HepG2 (cell line): ENCODE measurements at regions of chr9 and their contacts with region 1.

Region 1: DNA sequence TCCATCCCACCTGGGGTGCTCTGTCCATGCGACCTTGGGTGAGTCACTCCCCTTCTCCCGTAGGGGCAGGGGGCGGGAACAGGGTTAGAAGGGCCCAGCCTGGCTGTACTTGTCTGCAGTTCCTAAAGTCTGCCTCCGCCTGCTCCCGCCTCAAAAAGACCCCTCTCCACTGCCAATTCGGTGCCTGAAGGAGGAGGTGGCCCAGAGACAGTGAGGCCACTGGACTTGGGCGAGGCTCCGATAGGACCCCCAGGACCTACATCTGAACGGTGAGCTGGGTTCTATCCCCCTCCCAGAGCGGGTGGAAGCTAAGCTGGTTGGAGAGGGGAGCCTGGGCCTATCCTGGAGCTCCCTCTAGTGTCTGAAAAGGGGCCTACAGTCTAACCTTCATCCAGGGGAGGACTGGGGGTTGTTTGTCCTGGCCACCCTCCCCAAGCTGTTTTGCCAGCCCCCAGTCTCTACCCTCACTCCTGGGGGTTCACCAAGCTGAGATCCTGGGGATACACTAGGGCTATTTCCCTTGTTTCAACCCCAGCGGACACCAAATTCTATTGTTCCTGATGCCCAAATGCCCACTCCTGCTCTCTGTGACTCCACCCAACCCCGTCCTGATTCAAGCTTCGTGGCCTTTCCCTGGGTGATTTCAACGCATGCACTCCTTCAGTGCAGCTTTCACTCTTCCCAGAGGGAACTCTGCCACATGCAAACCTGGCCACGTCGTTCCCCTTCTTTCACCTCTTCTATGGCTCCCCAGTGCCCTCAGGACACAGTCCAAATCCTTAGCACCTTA is 6.1 kb upstream of the CRB2 start:
- DNase-seq: peak; percentile 50
- ATAC-seq: peak; percentile 72
- H3K4me3 ChIP-seq: peak overlapping the region; percentile 16 to 65 (median 43); a peak in 5 of 6 replicates
- H3K27ac ChIP-seq: no peak overlapping the region
- H3K4me1 ChIP-seq: peaks cover 46% of the 10 kb centered on the region
- H3K27me3 ChIP-seq: peaks cover 2 to 36% of the 10 kb centered on the region in 2 experiments
- CTCF ChIP-seq: peak; percentile 97
- EP300 ChIP-seq: no peak
- POLR2A ChIP-seq: no peak
- RAD21 ChIP-seq: peak; percentile 97

Region 2: GRCh38 chr9:123081824-123082223 is 268.1 kb before region 1 on chr9:
- CTCF ChIA-PET with region 1: interaction called, 27 read pairs
- POLR2A ChIA-PET with region 1: no interaction called
- in situ Hi-C with region 1: loop called (anchors 5 kb)
- intact Hi-C with region 1: loop called (anchors 1 kb)
- DNase-seq: peak; percentile 48
- ATAC-seq: peak; percentile 62; the same call in 2 of the 3 replicates
- H3K4me3 ChIP-seq: no peak overlapping the region
- H3K27ac ChIP-seq: no peak overlapping the region
- H3K4me1 ChIP-seq: peaks cover 22% of the 10 kb centered on the region
- H3K27me3 ChIP-seq: no peaks in the 10 kb centered on the region
- CTCF ChIP-seq: peak; percentile 69
- EP300 ChIP-seq: no peak
- POLR2A ChIP-seq: no peak
- RAD21 ChIP-seq: peak; percentile 48; the same call in 1 of the 2 replicates

Region 3: GRCh38 chr9:123102375-123103110 is 247.3 kb before region 1 on chr9:
- CTCF ChIA-PET with region 1: interaction called, 4 read pairs
- POLR2A ChIA-PET with region 1: no interaction called
- in situ Hi-C with region 1: no loop called
- intact Hi-C with region 1: loop called (anchors 5 kb)
- DNase-seq: no peak
- ATAC-seq: peak; percentile 30; the same call in 1 of the 3 replicates
- H3K4me3 ChIP-seq: no peak overlapping the region
- H3K27ac ChIP-seq: no peak overlapping the region
- H3K4me1 ChIP-seq: peaks cover 24% of the 10 kb centered on the region
- H3K27me3 ChIP-seq: no peaks in the 10 kb centered on the region
- CTCF ChIP-seq: peak; percentile 37
- EP300 ChIP-seq: no peak
- POLR2A ChIP-seq: no peak
- RAD21 ChIP-seq: no peak

Region 4: DNA sequence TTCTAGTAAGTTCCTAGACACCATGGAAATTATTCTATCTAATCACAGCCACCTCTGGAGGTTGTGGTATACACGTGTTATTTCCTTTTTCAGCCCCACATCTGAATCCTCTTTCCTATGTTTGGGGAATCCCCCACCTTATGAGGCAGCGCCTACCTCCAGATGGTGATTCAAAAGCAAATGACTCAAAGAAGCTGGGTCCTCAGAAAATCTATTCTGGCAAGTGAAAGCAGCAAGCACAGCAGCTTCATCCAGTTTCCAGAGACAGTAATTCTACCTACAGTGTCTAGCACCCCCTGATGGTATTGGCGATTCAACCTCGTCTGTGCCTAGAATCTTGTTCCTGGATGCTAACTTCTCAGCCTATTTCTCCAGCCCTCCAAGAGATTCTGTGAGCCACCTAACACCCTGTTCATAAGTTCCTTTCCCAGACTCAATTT is 124.5 kb before region 1 on chr9:
- CTCF ChIA-PET with region 1: no interaction called
- POLR2A ChIA-PET with region 1: no interaction called
- in situ Hi-C with region 1: no loop called
- intact Hi-C with region 1: loop called (anchors 2 kb)
- DNase-seq: peak; percentile 29
- ATAC-seq: peak; percentile 80
- H3K4me3 ChIP-seq: no peak overlapping the region
- H3K27ac ChIP-seq: no peak overlapping the region
- H3K4me1 ChIP-seq: peaks cover 23% of the 10 kb centered on the region
- H3K27me3 ChIP-seq: no peaks in the 10 kb centered on the region
- CTCF ChIP-seq: peak; percentile 72
- EP300 ChIP-seq: no peak
- POLR2A ChIP-seq: no peak
- RAD21 ChIP-seq: no peak

Region 5: GRCh38 chr9:123383512-123384170 is 33.8 kb after region 1 on chr9:
- CTCF ChIA-PET with region 1: interaction called, 35 read pairs
- POLR2A ChIA-PET with region 1: no interaction called
- in situ Hi-C with region 1: loop called (anchors 5 kb)
- intact Hi-C with region 1: loop called (anchors 1 kb)
- DNase-seq: no peak
- ATAC-seq: no peak
- H3K4me3 ChIP-seq: no peak overlapping the region
- H3K27ac ChIP-seq: no peak overlapping the region
- H3K4me1 ChIP-seq: no peaks in the 10 kb centered on the region
- H3K27me3 ChIP-seq: no peaks in the 10 kb centered on the region
- CTCF ChIP-seq: no peak
- EP300 ChIP-seq: no peak
- POLR2A ChIP-seq: no peak
- RAD21 ChIP-seq: no peak

Region 6: GRCh38 chr9:123389070-123389469 is 39.2 kb after region 1 on chr9:
- CTCF ChIA-PET with region 1: interaction called, 35 read pairs
- POLR2A ChIA-PET with region 1: no interaction called
- in situ Hi-C with region 1: loop called (anchors 5 kb)
- intact Hi-C with region 1: loop called (anchors 1 kb)
- DNase-seq: no peak
- ATAC-seq: no peak
- H3K4me3 ChIP-seq: no peak overlapping the region
- H3K27ac ChIP-seq: no peak overlapping the region
- H3K4me1 ChIP-seq: no peaks in the 10 kb centered on the region
- H3K27me3 ChIP-seq: no peaks in the 10 kb centered on the region
- CTCF ChIP-seq: no peak
- EP300 ChIP-seq: no peak
- POLR2A ChIP-seq: no peak
- RAD21 ChIP-seq: no peak

Region 7: DNA sequence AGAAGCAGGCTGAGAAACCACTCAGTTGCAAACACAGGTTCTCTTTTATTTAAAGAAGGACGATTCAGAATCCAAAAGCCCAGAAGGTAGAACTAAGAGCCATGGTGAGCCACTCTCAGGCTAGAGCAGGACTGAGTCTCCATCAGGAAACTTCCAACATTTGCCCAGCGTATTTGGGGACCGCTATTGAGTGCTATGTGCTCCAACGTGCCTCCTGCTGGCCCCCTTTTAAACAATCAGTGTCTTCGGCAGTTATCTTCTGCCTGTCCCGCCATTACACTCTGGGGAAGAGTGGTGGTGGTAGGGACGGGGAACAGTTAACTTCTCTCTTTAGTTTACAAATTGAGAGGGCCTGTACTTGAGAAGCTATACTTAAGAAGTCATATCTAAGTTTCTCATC is 502.0 kb after region 1 on chr9:
- CTCF ChIA-PET with region 1: no interaction called
- POLR2A ChIA-PET with region 1: no interaction called
- in situ Hi-C with region 1: no loop called
- intact Hi-C with region 1: no loop called
- DNase-seq: no peak
- ATAC-seq: no peak
- H3K4me3 ChIP-seq: no peak overlapping the region
- H3K27ac ChIP-seq: no peak overlapping the region
- H3K4me1 ChIP-seq: no peaks in the 10 kb centered on the region
- H3K27me3 ChIP-seq: no peaks in the 10 kb centered on the region
- CTCF ChIP-seq: no peak
- EP300 ChIP-seq: no peak
- POLR2A ChIP-seq: no peak
- RAD21 ChIP-seq: no peak